OCI-LY7 (cell line): ENCODE measurements at regions of chr6 and their contacts with region 1.

Region 1: DNA sequence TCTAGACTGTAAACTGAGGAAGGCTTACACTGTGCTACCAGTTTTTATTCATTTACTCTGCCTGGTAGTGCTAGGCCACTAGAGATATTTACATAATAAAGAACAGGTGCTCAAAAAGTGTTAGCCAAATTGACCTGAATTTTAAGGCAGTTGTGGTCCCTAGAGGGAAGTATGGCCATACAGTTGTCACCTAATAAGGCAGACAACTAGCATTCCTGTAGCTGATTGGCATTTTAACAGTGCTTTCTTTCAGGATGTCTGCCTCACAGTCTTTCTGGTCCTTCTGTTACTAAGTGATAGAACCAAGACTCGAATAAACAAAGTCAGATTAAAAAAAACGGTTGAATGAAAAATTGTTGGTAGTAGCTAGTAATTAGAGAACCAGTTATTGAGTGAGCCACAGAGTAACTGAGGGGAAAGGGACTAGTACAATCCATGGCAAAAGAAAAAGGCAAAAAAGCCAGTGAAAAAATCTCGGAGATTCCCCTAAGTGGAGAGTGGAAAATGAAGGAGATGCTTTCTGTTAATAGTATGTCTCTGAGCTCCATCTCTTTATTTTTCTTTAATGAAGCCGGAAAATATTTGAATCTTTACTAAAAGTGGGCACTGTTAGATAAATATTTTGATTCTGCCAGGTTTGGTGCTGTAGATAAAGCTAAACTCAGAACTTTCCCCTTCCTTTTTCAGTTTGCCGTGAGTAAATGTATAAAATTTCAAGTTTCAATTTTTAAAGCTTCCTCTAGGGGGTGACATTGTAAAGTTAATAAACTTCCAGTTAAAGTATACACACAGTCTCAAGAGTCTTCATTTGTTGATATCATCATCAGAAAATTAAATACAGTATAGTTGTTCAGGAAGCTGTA is 9.1 kb downstream of the VTA1 start:
- DNase-seq: peak; percentile 59
- H3K4me3 ChIP-seq: peak overlapping the region; percentile 38
- H3K27ac ChIP-seq: peak overlapping the region; percentile 50
- H3K4me1 ChIP-seq: peaks cover 16% of the 10 kb centered on the region
- CTCF ChIP-seq: peak; percentile 79

Region 2: GRCh38 chr6:140463312-140463710 is 1692.8 kb before region 1 on chr6:
- CTCF ChIA-PET with region 1: no interaction called
- POLR2A ChIA-PET with region 1: no interaction called
- intact Hi-C with region 1: no loop called
- DNase-seq: no peak
- H3K4me3 ChIP-seq: no peak overlapping the region
- H3K27ac ChIP-seq: no peak overlapping the region
- H3K4me1 ChIP-seq: no peaks in the 10 kb centered on the region
- CTCF ChIP-seq: no peak

Region 3: DNA sequence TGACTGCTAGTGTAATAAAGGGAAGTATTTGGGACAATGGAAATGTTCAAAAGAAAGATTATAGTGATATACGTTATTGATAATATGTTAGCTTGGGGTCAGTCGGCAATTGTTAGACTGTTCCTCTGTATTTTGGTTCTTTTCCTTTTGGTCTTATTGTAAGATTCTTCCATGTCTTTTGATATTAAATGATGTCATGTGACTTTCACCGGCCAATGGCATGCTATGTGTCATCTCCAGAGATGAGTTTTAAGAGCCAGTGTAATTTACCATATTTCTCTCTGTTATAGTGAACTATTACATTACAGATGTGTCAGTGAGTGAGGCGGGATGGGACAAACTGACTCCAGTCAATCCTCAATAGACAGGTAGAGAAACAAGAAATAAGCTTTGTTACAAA is 968.5 kb before region 1 on chr6:
- CTCF ChIA-PET with region 1: no interaction called
- POLR2A ChIA-PET with region 1: no interaction called
- intact Hi-C with region 1: no loop called
- DNase-seq: no peak
- H3K4me3 ChIP-seq: no peak overlapping the region
- H3K27ac ChIP-seq: no peak overlapping the region
- H3K4me1 ChIP-seq: no peaks in the 10 kb centered on the region
- CTCF ChIP-seq: no peak

Region 4: GRCh38 chr6:142088858-142089216 is 67.3 kb before region 1 on chr6:
- CTCF ChIA-PET with region 1: no interaction called
- POLR2A ChIA-PET with region 1: no interaction called
- intact Hi-C with region 1: no loop called
- DNase-seq: no peak
- H3K4me3 ChIP-seq: no peak overlapping the region
- H3K27ac ChIP-seq: no peak overlapping the region
- H3K4me1 ChIP-seq: no peaks in the 10 kb centered on the region
- CTCF ChIP-seq: no peak

Region 5: GRCh38 chr6:142187209-142187608 is 31.1 kb after region 1 on chr6:
- CTCF ChIA-PET with region 1: no interaction called
- POLR2A ChIA-PET with region 1: interaction called, 10 read pairs
- intact Hi-C with region 1: no loop called
- DNase-seq: no peak
- H3K4me3 ChIP-seq: no peak overlapping the region
- H3K27ac ChIP-seq: no peak overlapping the region
- H3K4me1 ChIP-seq: no peaks in the 10 kb centered on the region
- CTCF ChIP-seq: no peak